CD4-positive, alpha-beta T cell (primary cell): ENCODE measurements at regions of chr6 and their contacts with region 1.

Region 1: DNA sequence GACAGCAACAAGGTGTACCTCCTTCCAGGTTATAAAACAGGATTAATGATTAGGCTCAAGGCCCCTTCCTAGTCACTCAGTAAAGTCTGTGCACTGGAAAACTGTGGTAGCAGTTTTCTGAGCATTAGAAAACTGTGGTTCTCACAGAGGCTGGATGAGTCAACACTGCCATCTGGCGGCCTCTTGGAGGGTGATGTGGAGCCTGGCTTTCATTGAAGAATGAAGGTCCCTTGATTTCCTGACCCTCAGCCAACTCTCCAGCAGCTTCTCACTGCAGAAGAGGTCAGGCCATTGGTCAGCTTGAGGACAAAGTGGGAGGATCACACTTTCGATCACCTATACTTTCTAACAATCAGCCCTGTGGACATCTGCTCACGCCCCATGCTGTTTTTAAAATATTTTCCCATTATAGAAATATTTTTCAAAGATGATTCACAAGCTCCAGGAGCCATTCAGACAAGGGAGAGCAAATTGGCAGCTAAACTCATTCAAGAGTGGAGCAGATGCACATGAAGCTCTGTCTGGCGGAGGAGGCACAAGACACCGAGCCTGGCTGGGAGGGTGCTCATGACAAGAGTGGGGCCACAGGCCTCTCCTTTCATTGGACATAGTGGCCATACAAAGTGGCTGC is 23.2 kb downstream of the PSMB1 start:
- DNase-seq: peak; percentile 42 to 79 (median 60)
- ATAC-seq: peak; percentile 69
- H3K4me3 ChIP-seq: no peak overlapping the region
- H3K4me3 Mint-ChIP-seq: no peak overlapping the region
- H3K27ac ChIP-seq: no peak overlapping the region
- H3K27ac Mint-ChIP-seq: no peak overlapping the region
- H3K4me1 ChIP-seq: no peaks in the 10 kb centered on the region
- H3K4me1 Mint-ChIP-seq: peaks cover 5% of the 10 kb centered on the region
- H3K27me3 ChIP-seq: no peaks in the 10 kb centered on the region
- H3K27me3 Mint-ChIP-seq: no peaks in the 10 kb centered on the region
- CTCF ChIP-seq: peak; percentile 73

Region 2: GRCh38 chr6:168895102-168895812 is 1634.7 kb before region 1 on chr6:
- CTCF ChIA-PET with region 1: interaction called, 3 read pairs
- POLR2A ChIA-PET with region 1: no interaction called
- intact Hi-C with region 1: loop called (anchors 1 to 5 kb)
- DNase-seq: peak; percentile 62 to 87 (median 74)
- ATAC-seq: peak; percentile 96
- H3K4me3 ChIP-seq: peak overlapping the region; percentile 28
- H3K4me3 Mint-ChIP-seq: peak overlapping the region; percentile 4
- H3K27ac ChIP-seq: no peak overlapping the region
- H3K27ac Mint-ChIP-seq: no peak overlapping the region
- H3K4me1 ChIP-seq: peaks cover 8% of the 10 kb centered on the region
- H3K4me1 Mint-ChIP-seq: peaks cover 15% of the 10 kb centered on the region
- H3K27me3 ChIP-seq: no peaks in the 10 kb centered on the region
- H3K27me3 Mint-ChIP-seq: no peaks in the 10 kb centered on the region
- CTCF ChIP-seq: peak; percentile 83

Region 3: GRCh38 chr6:168956884-168957730 is 1572.8 kb before region 1 on chr6:
- CTCF ChIA-PET with region 1: interaction called, 3 read pairs
- POLR2A ChIA-PET with region 1: no interaction called
- intact Hi-C with region 1: loop called (anchors 1 to 2 kb)
- DNase-seq: peak in 13 of 14 experiments; percentile 10 to 66 (median 28)
- ATAC-seq: peak; percentile 39
- H3K4me3 ChIP-seq: no peak overlapping the region
- H3K4me3 Mint-ChIP-seq: no peak overlapping the region
- H3K27ac ChIP-seq: no peak overlapping the region
- H3K27ac Mint-ChIP-seq: no peak overlapping the region
- H3K4me1 ChIP-seq: no peaks in the 10 kb centered on the region
- H3K4me1 Mint-ChIP-seq: no peaks in the 10 kb centered on the region
- H3K27me3 ChIP-seq: peaks cover 0 to 13% of the 10 kb centered on the region in 2 experiments
- H3K27me3 Mint-ChIP-seq: peaks cover 44% of the 10 kb centered on the region
- CTCF ChIP-seq: peak; percentile 61

Region 4: GRCh38 chr6:169789982-169790927 is 739.7 kb before region 1 on chr6:
- CTCF ChIA-PET with region 1: no interaction called
- POLR2A ChIA-PET with region 1: no interaction called
- intact Hi-C with region 1: loop called in 1 of 2 experiments (anchors 1 kb)
- DNase-seq: peak; percentile 46 to 83 (median 67)
- ATAC-seq: peak; percentile 97
- H3K4me3 ChIP-seq: peak overlapping the region; percentile 70
- H3K4me3 Mint-ChIP-seq: peak overlapping the region; percentile 89
- H3K27ac ChIP-seq: no peak overlapping the region
- H3K27ac Mint-ChIP-seq: no peak overlapping the region
- H3K4me1 ChIP-seq: peaks cover 16% of the 10 kb centered on the region
- H3K4me1 Mint-ChIP-seq: peaks cover 18% of the 10 kb centered on the region
- H3K27me3 ChIP-seq: no peaks in the 10 kb centered on the region
- H3K27me3 Mint-ChIP-seq: peaks cover 39% of the 10 kb centered on the region
- CTCF ChIP-seq: peak; percentile 95

Region 5: DNA sequence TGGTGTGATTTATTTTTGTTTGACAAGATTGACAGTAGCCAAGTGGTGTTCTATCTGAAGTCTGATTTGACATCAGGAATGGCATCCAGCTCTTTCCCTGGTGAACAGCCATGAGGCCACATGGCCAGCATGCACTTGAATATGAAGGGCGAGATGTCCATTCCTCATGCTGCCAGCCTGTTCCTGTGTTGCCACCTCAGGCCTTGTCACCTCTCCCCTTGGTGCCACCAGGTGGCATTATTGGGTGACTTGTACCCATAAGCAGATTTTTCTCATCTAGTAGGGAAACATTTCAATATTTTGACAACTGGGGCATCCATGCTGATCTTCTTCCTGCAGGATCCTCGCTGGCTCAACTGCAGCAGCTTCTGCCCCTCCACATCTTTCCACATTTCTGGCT is 579.4 kb before region 1 on chr6:
- CTCF ChIA-PET with region 1: no interaction called
- POLR2A ChIA-PET with region 1: no interaction called
- intact Hi-C with region 1: loop called in 1 of 2 experiments (anchors 1 kb)
- DNase-seq: peak in 9 of 14 experiments; percentile 10 to 66 (median 36)
- ATAC-seq: no peak
- H3K4me3 ChIP-seq: no peak overlapping the region
- H3K4me3 Mint-ChIP-seq: no peak overlapping the region
- H3K27ac ChIP-seq: no peak overlapping the region
- H3K27ac Mint-ChIP-seq: no peak overlapping the region
- H3K4me1 ChIP-seq: no peaks in the 10 kb centered on the region
- H3K4me1 Mint-ChIP-seq: no peaks in the 10 kb centered on the region
- H3K27me3 ChIP-seq: no peaks in the 10 kb centered on the region
- H3K27me3 Mint-ChIP-seq: no peaks in the 10 kb centered on the region
- CTCF ChIP-seq: peak; percentile 52

Region 6: DNA sequence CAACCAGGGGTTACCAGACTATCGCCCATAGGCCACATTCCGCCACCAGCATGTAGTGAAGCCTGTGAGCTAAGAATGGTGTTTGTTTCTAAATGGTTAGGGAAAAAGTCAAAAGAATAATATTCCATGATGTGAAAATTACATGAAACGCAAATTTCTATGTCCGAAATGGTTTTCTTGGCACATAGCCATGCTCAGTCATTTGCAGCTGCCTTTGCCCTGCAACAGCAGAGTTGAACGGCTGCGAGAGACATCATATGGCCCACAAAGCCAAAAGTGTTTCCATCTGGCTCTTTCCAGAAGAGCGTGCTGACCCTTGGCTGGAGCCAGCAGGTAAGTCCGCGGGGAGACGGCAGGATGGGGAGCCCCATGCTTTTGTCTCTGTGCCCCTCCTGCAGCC is 162.7 kb before region 1 on chr6:
- CTCF ChIA-PET with region 1: no interaction called
- POLR2A ChIA-PET with region 1: no interaction called
- intact Hi-C with region 1: loop called in 1 of 2 experiments (anchors 5 kb)
- DNase-seq: no peak
- ATAC-seq: no peak
- H3K4me3 ChIP-seq: no peak overlapping the region
- H3K4me3 Mint-ChIP-seq: no peak overlapping the region
- H3K27ac ChIP-seq: no peak overlapping the region
- H3K27ac Mint-ChIP-seq: peak overlapping the region; percentile 53
- H3K4me1 ChIP-seq: no peaks in the 10 kb centered on the region
- H3K4me1 Mint-ChIP-seq: no peaks in the 10 kb centered on the region
- H3K27me3 ChIP-seq: no peaks in the 10 kb centered on the region
- H3K27me3 Mint-ChIP-seq: no peaks in the 10 kb centered on the region
- CTCF ChIP-seq: no peak

Region 7: GRCh38 chr6:170510631-170511030 is 19.3 kb before region 1 on chr6:
- CTCF ChIA-PET with region 1: no interaction called
- POLR2A ChIA-PET with region 1: no interaction called
- intact Hi-C with region 1: no loop called
- DNase-seq: no peak
- ATAC-seq: no peak
- H3K4me3 ChIP-seq: no peak overlapping the region
- H3K4me3 Mint-ChIP-seq: no peak overlapping the region
- H3K27ac ChIP-seq: no peak overlapping the region
- H3K27ac Mint-ChIP-seq: no peak overlapping the region
- H3K4me1 ChIP-seq: no peaks in the 10 kb centered on the region
- H3K4me1 Mint-ChIP-seq: no peaks in the 10 kb centered on the region
- H3K27me3 ChIP-seq: peaks cover 0 to 8% of the 10 kb centered on the region in 2 experiments
- H3K27me3 Mint-ChIP-seq: peaks cover 36% of the 10 kb centered on the region
- CTCF ChIP-seq: no peak